Activated CD4-positive, alpha-beta memory T cell treated with anti-CD3 and anti-CD28 coated beads for 36 hours (primary cell): ENCODE measurements at regions of chr11 and their contacts with region 1.

Region 1: DNA sequence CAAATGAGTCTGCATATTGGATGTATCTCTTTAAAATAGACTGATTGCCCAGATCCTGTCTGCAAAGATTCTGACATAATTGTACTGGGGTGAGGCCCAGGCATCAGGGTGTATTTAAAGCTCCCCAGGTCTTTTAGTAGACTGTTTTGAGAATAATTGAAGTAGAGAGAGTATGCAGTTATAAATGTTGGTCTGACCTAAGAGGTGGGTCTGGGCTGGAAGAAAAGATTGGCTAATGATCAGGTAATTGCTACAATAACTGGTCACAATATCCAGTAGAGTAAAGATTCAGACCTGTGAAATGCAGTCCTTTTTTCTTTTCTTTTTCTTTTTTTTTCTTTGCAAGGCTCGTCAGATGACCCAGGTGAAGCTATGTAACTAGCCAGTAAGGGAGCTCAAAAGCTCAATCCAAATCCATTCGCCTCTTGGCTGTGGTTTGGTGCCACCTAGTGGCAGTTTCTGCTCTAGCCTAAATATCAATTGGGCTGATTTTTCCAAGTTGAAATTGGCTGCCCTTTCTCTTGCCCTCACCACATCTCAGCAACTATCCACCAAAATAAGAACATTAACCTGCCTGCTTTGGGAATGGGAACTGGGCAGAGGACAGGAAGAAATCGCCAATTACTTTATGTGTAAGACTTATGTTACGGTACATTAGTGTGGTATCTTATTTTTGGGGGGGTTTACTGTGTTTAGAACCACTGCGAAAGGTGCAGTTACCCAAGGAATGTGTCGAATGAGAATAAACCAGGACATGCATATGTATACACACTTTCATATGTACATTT is 45.9 kb downstream of the ZNF143 start:
- DNase-seq: peak; percentile 82
- H3K4me3 Mint-ChIP-seq: no peak overlapping the region
- H3K27ac Mint-ChIP-seq: no peak overlapping the region
- H3K4me1 Mint-ChIP-seq: peaks cover 11% of the 10 kb centered on the region
- H3K27me3 Mint-ChIP-seq: no peaks in the 10 kb centered on the region

Region 2: DNA sequence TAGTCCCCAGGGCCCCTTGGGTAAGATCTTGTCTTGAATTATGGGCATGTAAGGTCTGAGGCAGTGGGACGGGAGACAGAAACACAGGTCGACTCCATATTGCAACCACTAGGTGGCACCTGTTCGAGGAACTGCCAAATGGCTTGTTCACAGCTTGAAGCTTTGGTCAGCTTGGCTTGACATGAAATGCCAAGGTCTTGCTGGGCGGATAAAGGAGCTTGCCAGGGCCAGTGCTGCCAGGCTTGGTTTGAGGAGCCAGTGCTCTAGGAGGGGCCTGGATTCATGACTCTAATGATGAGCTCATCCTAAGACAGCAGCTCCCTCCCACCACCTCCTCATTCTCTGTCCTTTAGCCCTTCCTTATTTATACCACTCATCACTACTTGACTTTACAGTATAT is 491.0 kb before region 1 on chr11:
- CTCF ChIA-PET with region 1: interaction called, 48 read pairs
- POLR2A ChIA-PET with region 1: no interaction called
- intact Hi-C with region 1: loop called (anchors 1 kb)
- DNase-seq: peak; percentile 70
- H3K4me3 Mint-ChIP-seq: no peak overlapping the region
- H3K27ac Mint-ChIP-seq: no peak overlapping the region
- H3K4me1 Mint-ChIP-seq: peaks cover 18% of the 10 kb centered on the region
- H3K27me3 Mint-ChIP-seq: no peaks in the 10 kb centered on the region

Region 3: DNA sequence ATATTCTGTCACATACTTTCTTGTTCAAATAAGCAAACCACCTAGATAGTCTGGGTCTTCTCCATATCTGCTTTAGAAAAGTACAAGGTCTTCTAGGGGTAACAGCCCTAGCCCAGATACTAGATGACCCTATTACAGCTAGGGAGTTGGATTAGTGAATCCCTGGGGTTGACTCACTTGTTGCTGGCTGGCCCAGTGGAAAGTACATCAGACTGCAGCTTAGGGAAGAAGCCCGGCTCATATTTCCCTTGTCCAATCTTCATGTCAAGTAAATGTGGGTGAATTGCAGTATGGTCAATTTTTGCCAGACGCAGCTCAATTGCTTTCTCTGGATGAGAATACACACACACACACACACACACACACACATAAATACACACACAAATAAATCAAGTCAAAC is 336.2 kb before region 1 on chr11:
- CTCF ChIA-PET with region 1: interaction called, 66 read pairs
- POLR2A ChIA-PET with region 1: no interaction called
- intact Hi-C with region 1: loop called (anchors 1 kb)
- DNase-seq: no peak
- H3K4me3 Mint-ChIP-seq: no peak overlapping the region
- H3K27ac Mint-ChIP-seq: no peak overlapping the region
- H3K4me1 Mint-ChIP-seq: peaks cover 10% of the 10 kb centered on the region
- H3K27me3 Mint-ChIP-seq: no peaks in the 10 kb centered on the region

Region 4: GRCh38 chr11:9438611-9439010 is 68.1 kb before region 1 on chr11:
- CTCF ChIA-PET with region 1: interaction called, 12 read pairs
- POLR2A ChIA-PET with region 1: no interaction called
- intact Hi-C with region 1: no loop called
- DNase-seq: no peak
- H3K4me3 Mint-ChIP-seq: no peak overlapping the region
- H3K27ac Mint-ChIP-seq: no peak overlapping the region
- H3K4me1 Mint-ChIP-seq: no peaks in the 10 kb centered on the region
- H3K27me3 Mint-ChIP-seq: no peaks in the 10 kb centered on the region

Region 5: DNA sequence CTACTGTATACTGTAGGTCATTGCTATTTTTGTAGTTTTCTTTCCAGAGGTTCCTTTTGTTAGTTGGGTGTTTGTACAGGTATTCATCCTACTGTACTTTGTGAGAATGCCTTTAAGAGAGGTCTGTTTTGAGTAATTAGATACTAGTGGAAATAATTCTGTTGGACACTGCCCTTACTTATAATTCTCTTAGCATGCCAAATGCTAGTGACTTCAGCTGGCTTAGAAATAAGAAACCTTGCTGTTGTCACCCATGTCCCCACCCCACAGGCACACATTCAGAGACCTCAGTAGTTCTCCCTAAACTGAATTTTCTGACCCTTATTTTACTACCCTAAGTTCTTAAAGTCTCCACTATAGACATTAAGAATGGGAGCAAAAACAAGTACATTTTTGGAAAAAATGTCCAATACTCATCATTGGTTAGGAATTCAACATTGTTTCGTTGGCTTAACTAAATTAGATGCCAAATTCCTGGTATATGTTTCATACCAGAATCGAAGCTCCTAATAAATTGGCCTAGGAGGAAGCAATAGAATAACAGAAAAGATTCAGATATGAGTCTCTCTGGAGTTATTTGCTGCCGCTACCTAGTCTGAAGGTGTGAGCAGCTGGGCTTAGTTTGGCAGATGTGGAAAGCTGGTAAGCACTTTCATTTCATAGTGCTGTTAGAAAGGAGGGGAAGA is 17.5 kb before region 1 on chr11:
- CTCF ChIA-PET with region 1: interaction called, 12 read pairs
- POLR2A ChIA-PET with region 1: no interaction called
- intact Hi-C with region 1: no loop called
- DNase-seq: no peak
- H3K4me3 Mint-ChIP-seq: no peak overlapping the region
- H3K27ac Mint-ChIP-seq: no peak overlapping the region
- H3K4me1 Mint-ChIP-seq: no peaks in the 10 kb centered on the region
- H3K27me3 Mint-ChIP-seq: no peaks in the 10 kb centered on the region

Region 6: DNA sequence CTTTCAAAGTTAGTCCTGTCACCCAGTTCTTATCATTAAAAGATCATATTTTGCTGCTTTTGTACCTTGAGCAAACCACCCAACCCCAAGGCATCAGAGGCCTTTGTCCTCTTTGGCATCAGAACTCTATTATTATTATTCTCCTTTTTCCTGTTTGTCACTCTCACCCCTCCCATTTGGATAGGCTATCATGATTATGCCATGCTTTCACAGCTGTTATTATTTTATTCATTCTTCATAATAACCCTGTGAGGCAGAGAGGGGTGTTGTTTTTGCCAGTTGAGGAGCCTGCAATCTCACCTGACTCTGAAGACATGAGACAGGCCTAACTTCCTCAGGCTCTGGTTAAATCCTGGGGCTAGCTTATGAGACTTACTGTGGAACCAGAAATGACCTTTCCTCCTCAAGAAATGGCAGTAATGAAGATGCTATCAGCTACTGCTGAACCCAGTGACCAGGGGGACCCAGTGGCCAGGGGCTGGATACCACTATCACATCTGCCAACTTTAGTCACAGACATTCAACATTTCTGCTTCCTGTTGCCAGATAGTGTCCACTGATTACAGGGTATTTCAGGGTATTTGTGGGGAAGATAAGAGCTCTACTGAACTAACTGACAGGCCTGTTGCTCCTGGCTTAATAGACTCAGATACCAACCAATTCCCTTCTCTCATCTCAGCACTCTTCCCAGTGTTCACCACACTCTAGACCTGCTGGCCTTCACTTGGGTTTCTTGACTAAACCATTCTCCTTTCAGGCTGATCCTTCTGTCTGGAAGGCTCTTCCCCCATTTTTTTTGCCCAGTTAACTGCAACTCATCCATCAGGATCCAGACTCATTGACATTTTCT is 145.4 kb after region 1 on chr11:
- CTCF ChIA-PET with region 1: no interaction called
- POLR2A ChIA-PET with region 1: no interaction called
- intact Hi-C with region 1: no loop called
- DNase-seq: no peak
- H3K4me3 Mint-ChIP-seq: no peak overlapping the region
- H3K27ac Mint-ChIP-seq: no peak overlapping the region
- H3K4me1 Mint-ChIP-seq: no peaks in the 10 kb centered on the region
- H3K27me3 Mint-ChIP-seq: no peaks in the 10 kb centered on the region

Region 7: DNA sequence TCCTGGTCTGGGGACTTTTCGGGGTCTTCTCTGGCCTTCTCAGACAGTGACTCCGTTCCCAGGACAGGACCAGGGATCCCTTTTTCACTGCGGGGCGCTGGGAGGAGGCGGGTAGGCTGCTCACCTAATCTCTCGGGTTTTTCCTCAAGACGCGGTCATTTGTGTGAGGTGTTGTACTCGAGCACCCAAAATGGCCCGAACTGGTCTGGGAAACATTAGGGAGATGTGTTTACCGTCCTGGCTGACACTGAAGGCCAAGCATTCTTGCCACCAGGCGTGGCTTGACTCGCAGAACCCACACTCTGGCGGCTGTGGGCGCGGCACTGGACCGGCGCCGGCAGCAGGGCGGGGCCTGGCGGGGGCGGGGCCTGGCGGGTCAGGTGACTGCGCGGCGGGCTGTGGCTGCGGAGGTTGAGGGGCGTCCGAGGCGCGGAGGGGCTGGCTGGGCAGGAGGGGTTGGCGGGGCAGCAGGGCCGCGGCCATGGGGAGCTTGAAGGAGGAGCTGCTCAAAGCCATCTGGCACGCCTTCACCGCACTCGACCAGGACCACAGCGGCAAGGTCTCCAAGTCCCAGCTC is 157.1 kb after region 1 on chr11 and contains the start of gene SWAP70:
- CTCF ChIA-PET with region 1: no interaction called
- POLR2A ChIA-PET with region 1: no interaction called
- intact Hi-C with region 1: no loop called
- DNase-seq: peak; percentile 81
- H3K4me3 Mint-ChIP-seq: peak within 1 kb of the TSS; percentile 84
- H3K27ac Mint-ChIP-seq: no peak within 1 kb of the TSS
- H3K4me1 Mint-ChIP-seq: peaks cover 14% of the 10 kb centered on the region
- H3K27me3 Mint-ChIP-seq: peaks cover 26% of the 10 kb centered on the region
- total RNA-seq, gene SWAP70: 7.7 to 8.6 TPM